A549 (cell line): ENCODE measurements at regions of chr11 and their contacts with region 1.

Region 1: GRCh38 chr11:66883016-66883968 is 26.4 kb downstream of the LRFN4 start:
- DNase-seq: peak; percentile 85 to 93
- ATAC-seq: peak; percentile 65 to 79
- H3K4me3 ChIP-seq: no peak overlapping the region
- H3K27ac ChIP-seq: peak overlapping the region; percentile 95 to 97
- H3K4me1 ChIP-seq: peaks cover 99% of the 10 kb centered on the region
- CTCF ChIP-seq: peak; percentile 87
- EP300 ChIP-seq: peak in 1 of 2 experiments; percentile 15; a peak in 1 of 5 replicates
- POLR2A ChIP-seq: no peak
- RAD21 ChIP-seq: peak; percentile 79 to 85

Region 2: GRCh38 chr11:66694732-66695207 is 188.5 kb before region 1 on chr11:
- CTCF ChIA-PET with region 1: interaction called, 29 read pairs
- POLR2A ChIA-PET with region 1: no interaction called
- DNase-seq: peak; percentile 93 to 98
- ATAC-seq: peak; percentile 96 to 99
- H3K4me3 ChIP-seq: no peak overlapping the region
- H3K27ac ChIP-seq: peak overlapping the region; percentile 36 to 69; a peak in 3 of 6 replicates
- H3K4me1 ChIP-seq: peaks cover 5% of the 10 kb centered on the region; the same call in 1 of the 3 replicates
- CTCF ChIP-seq: peak; percentile 99
- EP300 ChIP-seq: no peak
- POLR2A ChIP-seq: no peak
- RAD21 ChIP-seq: peak; percentile 96 to 97

Region 3: GRCh38 chr11:66842896-66843775 is 40.2 kb before region 1 on chr11 and contains the start of gene RCE1:
- CTCF ChIA-PET with region 1: interaction called, 30 read pairs
- POLR2A ChIA-PET with region 1: interaction called, 4 read pairs
- DNase-seq: peak; percentile 78 to 93
- ATAC-seq: peak; percentile 74 to 79
- H3K4me3 ChIP-seq: peak within 1 kb of the TSS; percentile 95
- H3K27ac ChIP-seq: peak within 1 kb of the TSS; percentile 98 to 99
- H3K4me1 ChIP-seq: peaks cover 45% of the 10 kb centered on the region
- CTCF ChIP-seq: no peak
- EP300 ChIP-seq: no peak
- POLR2A ChIP-seq: peak; percentile 81
- RAD21 ChIP-seq: peak in 1 of 2 experiments; percentile 31; a peak in 2 of 5 replicates
- polyA plus RNA-seq, gene RCE1: 20.3 and 22.1 TPM in 2 replicates

Region 4: DNA sequence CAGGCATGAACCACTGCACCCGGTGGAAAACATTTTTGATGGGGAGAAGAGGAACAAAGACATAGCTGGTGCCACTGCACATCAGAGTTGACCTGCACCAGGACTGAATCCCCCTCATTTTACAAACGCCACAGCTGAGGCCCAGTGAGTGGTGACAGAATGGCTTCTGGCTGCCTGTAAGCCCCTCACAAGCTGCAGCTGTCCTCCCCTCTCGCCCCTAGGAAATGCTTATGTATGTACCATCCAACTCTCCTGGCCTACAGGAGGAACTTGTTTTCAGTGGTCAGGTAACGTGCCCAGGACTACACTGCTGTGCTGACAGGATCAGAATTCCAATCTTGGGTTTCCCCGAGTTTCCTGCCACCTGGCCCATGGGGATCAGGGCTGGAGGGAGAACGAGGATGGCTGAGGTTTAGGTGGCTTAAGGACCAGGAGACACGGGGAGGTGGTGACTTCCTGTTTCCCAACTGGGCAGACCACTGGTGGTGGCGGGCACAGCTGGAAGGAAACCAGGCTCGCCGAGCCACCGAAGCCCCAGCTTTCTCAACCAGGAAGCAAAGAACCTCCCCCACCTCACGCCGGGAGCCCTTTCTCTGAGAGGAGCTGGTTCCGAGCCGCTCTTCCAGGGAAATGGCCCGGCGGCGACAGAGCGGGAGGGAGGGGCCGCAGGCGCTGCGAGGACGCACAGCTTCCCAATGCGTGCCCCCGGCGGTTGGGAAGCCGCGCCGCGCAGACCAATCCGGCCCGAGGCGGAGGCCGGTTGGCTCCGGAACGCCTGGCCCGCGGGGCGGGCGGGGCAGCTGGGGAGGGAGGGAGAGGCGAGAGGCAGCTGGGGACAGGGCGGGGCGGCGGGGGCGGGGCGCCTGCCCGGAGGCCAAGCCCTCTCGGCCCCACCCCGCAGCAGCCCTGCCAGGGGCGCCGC is 27.5 kb before region 1 on chr11:
- CTCF ChIA-PET with region 1: interaction called, 15 read pairs
- POLR2A ChIA-PET with region 1: interaction called, 7 read pairs
- DNase-seq: peak; percentile 87 to 93
- ATAC-seq: peak; percentile 45 to 82
- H3K4me3 ChIP-seq: peak overlapping the region; percentile 74
- H3K27ac ChIP-seq: peak overlapping the region; percentile 93 to 97
- H3K4me1 ChIP-seq: peaks cover 34% of the 10 kb centered on the region
- CTCF ChIP-seq: no peak
- EP300 ChIP-seq: no peak
- POLR2A ChIP-seq: peak; percentile 43
- RAD21 ChIP-seq: peak in 1 of 2 experiments; percentile 28; a peak in 1 of 5 replicates

Region 5: GRCh38 chr11:66868726-66869566 is 14.3 kb before region 1 on chr11:
- CTCF ChIA-PET with region 1: interaction called, 135 read pairs
- POLR2A ChIA-PET with region 1: no interaction called
- DNase-seq: peak; percentile 86 to 89
- ATAC-seq: peak; percentile 75 to 92
- H3K4me3 ChIP-seq: no peak overlapping the region
- H3K27ac ChIP-seq: peak overlapping the region; percentile 31 to 76; a peak in 3 of 6 replicates
- H3K4me1 ChIP-seq: peaks cover 6% of the 10 kb centered on the region
- CTCF ChIP-seq: peak; percentile 45
- EP300 ChIP-seq: no peak
- POLR2A ChIP-seq: no peak
- RAD21 ChIP-seq: peak; percentile 29 to 43; a peak in 4 of 5 replicates

Region 6: GRCh38 chr11:66922551-66922950 is 39.3 kb after region 1 on chr11:
- CTCF ChIA-PET with region 1: no interaction called
- POLR2A ChIA-PET with region 1: no interaction called
- DNase-seq: no peak
- ATAC-seq: no peak
- H3K4me3 ChIP-seq: no peak overlapping the region
- H3K27ac ChIP-seq: peak overlapping the region in 1 of 2 experiments; percentile 52; a peak in 1 of 6 replicates
- H3K4me1 ChIP-seq: peaks cover 31% of the 10 kb centered on the region
- CTCF ChIP-seq: no peak
- EP300 ChIP-seq: no peak
- POLR2A ChIP-seq: no peak
- RAD21 ChIP-seq: no peak

Region 7: GRCh38 chr11:67022328-67022927 is 139.1 kb after region 1 on chr11:
- CTCF ChIA-PET with region 1: interaction called, 16 read pairs
- POLR2A ChIA-PET with region 1: no interaction called
- DNase-seq: peak in 1 of 2 experiments; percentile 45
- ATAC-seq: peak in 1 of 2 experiments; percentile 15; a peak in 3 of 6 replicates
- H3K4me3 ChIP-seq: peak overlapping the region; percentile 66; the same call in 2 of the 3 replicates
- H3K27ac ChIP-seq: peak overlapping the region; percentile 72 to 87; a peak in 5 of 6 replicates
- H3K4me1 ChIP-seq: peaks cover 24% of the 10 kb centered on the region
- CTCF ChIP-seq: no peak
- EP300 ChIP-seq: no peak
- POLR2A ChIP-seq: no peak
- RAD21 ChIP-seq: no peak

Region 8: GRCh38 chr11:67062308-67063063 is 179.2 kb after region 1 on chr11:
- CTCF ChIA-PET with region 1: no interaction called
- POLR2A ChIA-PET with region 1: no interaction called
- DNase-seq: peak in 1 of 2 experiments; percentile 43
- ATAC-seq: peak; percentile 34 to 52
- H3K4me3 ChIP-seq: no peak overlapping the region
- H3K27ac ChIP-seq: peak overlapping the region; percentile 41 to 73
- H3K4me1 ChIP-seq: peaks cover 34% of the 10 kb centered on the region
- CTCF ChIP-seq: no peak
- EP300 ChIP-seq: no peak
- POLR2A ChIP-seq: no peak
- RAD21 ChIP-seq: no peak